Right ventricle myocardium superior (tissue), 1 donor: ENCODE measurements at regions of chr12 and their contacts with region 1.

Region 1: GRCh38 chr12:110619534-110619953 is 5.6 kb downstream of the TCTN1 start:
- DNase-seq: no peak
- ATAC-seq: no peak

Region 2: GRCh38 chr12:110367181-110367864 is 252.2 kb before region 1 on chr12:
- intact Hi-C with region 1: no loop called
- DNase-seq: no peak
- ATAC-seq: no peak

Region 3: GRCh38 chr12:110555577-110556406 is 63.8 kb before region 1 on chr12:
- intact Hi-C with region 1: no loop called
- DNase-seq: no peak
- ATAC-seq: peak; percentile 57

Region 4: DNA sequence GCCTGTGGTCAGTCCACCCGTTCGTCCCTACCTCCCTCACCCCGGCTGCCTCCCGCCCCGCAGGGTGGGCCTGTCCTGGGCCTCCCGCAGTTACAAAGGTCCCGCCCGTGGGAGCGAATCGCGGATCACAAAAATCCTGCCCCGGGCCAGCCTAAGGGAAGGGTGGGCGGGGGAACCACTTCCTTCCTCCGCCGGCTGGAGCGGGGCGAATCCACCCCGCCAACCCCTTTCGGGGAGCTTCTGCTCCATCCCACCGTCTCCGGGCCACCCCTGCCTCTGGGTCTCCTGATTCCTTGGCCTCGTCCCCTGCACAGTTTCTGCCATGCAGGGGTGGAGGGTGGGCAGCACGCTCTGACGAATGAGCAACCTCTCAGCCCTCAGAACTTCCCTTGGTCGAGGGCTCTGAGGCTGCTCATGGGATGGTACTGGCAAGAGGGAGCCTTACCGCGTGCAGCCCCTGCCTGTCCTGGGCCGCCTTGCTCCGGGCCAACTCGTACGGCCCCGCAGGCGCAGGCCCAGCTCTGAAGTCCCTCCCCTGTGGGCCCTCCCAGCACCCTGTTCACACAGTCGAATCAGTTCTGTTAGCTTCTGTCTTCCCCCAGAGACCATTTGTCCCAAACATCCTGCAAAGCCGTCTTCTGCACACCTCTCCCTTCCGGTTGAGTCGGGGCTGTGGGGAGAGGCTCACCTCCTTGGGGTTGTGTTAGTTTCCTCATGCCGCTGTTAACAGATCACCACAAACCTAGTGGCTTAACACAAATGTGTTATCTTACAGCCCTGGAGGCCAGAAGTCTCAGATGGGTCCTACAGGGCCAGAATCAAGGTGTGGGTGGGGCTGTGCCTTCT is 70.0 kb after region 1 on chr12:
- intact Hi-C with region 1: loop called (anchors 5 kb)
- DNase-seq: peak; percentile 78
- ATAC-seq: peak; percentile 79

Region 5: GRCh38 chr12:110766311-110767154 is 147.0 kb after region 1 on chr12:
- intact Hi-C with region 1: no loop called
- DNase-seq: no peak
- ATAC-seq: peak; percentile 12